PC-9 (cell line): ENCODE measurements at regions of chr9 and their contacts with region 1.

Region 1: GRCh38 chr9:33458444-33458843 is 11.1 kb upstream of the AQP3 start:
- DNase-seq: peak; percentile 63 to 86
- H3K4me3 ChIP-seq: no peak overlapping the region
- H3K27ac ChIP-seq: peak overlapping the region; percentile 65
- H3K4me1 ChIP-seq: peaks cover 29% of the 10 kb centered on the region
- H3K27me3 ChIP-seq: no peaks in the 10 kb centered on the region
- CTCF ChIP-seq: no peak

Region 2: DNA sequence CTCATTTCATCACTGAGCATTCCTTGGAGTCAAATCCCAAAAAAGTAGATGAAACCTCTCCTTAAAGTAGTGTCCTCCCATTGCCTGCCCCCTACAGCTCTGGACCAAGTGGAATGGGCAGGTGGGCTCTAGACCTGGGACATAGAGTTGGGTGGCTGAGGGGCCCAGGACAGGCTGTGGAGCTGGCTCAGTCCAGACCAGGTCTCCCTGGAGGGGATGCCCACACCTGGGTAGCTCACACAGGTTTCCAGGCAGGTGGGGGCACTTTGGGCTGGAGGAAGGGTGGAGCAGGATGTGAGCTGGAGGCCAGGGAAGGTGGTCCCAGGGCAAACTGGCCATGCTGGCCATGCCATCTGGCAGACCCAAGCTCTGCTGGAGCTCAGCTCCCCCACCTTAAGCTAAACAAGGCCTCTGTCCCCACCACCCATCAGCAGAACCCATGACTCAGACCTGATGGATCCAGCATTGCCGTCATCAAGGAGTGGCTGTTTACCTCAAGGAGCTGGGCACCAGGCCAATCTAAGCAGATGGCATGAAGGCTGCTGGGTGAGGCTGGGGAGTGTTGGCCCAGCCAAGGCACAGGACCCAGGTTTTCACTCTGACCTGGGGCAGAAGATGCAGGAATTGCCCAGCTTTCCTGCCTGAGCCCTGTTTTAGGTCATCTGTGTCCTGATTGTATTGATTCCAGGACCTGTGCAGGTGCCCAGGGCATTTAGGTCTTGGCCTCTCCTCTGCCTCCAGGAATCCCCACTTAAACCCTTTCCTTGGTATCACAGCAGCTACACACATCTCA is 224.6 kb before region 1 on chr9:
- CTCF ChIA-PET with region 1: no interaction called
- POLR2A ChIA-PET with region 1: no interaction called
- intact Hi-C with region 1: loop called (anchors 5 kb)
- DNase-seq: peak; percentile 86 to 91
- H3K4me3 ChIP-seq: no peak overlapping the region
- H3K27ac ChIP-seq: peak overlapping the region; percentile 11; the same call in 1 of the 2 replicates
- H3K4me1 ChIP-seq: peaks cover 62% of the 10 kb centered on the region
- H3K27me3 ChIP-seq: no peaks in the 10 kb centered on the region
- CTCF ChIP-seq: no peak

Region 3: GRCh38 chr9:33374634-33375213 is 83.7 kb before region 1 on chr9:
- CTCF ChIA-PET with region 1: no interaction called
- POLR2A ChIA-PET with region 1: no interaction called
- intact Hi-C with region 1: no loop called
- DNase-seq: peak; percentile 61 to 63
- H3K4me3 ChIP-seq: no peak overlapping the region
- H3K27ac ChIP-seq: no peak overlapping the region
- H3K4me1 ChIP-seq: peaks cover 6% of the 10 kb centered on the region; the same call in 1 of the 2 replicates
- H3K27me3 ChIP-seq: no peaks in the 10 kb centered on the region
- CTCF ChIP-seq: peak; percentile 79